ENCODE measurements at regions of chr2 and their contacts with region 1.

Region 1: GRCh38 chr2:7758073-7758759 is 841.0 kb downstream of the RNF144A start:
- DNase-seq: no peak
- H3K4me3 Mint-ChIP-seq: no peak overlapping the region
- H3K27ac Mint-ChIP-seq: no peak overlapping the region
- H3K4me1 Mint-ChIP-seq: peaks cover 12% of the 10 kb centered on the region
- H3K27me3 Mint-ChIP-seq: peaks cover 12% of the 10 kb centered on the region

Region 2: DNA sequence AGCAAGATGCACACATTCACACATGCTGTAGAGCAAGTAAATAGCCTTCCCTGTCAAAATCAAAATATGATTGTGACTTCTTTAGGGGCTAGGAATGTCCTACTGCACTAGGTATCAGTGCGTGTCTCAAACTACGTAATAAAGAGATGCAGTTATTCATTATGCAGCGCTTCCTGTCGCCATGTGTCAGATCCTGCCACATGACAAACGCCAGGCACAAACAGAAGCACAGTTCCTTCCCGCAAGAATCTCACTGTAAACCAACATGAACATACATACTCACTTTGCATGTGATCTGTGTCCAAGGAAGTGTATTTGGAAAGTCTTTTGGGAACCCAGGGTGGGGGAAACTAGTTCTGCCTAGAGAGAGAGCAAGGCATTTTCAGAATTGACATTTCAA is 241.1 kb before region 1 on chr2:
- CTCF ChIA-PET with region 1: no interaction called
- intact Hi-C with region 1: no loop called
- DNase-seq: peak; percentile 61
- H3K4me3 Mint-ChIP-seq: peak overlapping the region; percentile 31
- H3K27ac Mint-ChIP-seq: peak overlapping the region; percentile 77
- H3K4me1 Mint-ChIP-seq: peaks cover 37% of the 10 kb centered on the region
- H3K27me3 Mint-ChIP-seq: no peaks in the 10 kb centered on the region

Region 3: DNA sequence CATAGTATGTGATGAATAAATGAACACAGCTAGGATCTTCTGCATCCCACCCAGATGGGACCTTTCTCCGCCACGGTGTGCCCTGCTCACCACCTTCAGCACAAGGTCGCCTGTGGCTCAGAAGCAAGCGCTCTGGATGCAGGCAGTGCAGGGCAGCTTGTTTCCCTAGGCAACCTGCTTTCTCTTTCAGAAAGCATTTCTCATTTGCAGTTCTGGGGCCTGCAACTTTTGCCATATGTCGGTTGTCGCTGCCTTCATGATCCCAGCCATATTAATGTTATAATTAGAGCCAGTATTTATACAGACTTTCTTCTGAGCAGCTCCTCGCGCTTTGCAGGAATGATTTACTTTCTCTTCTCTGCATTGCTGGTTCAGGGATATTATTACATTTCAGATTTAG is 148.2 kb before region 1 on chr2:
- CTCF ChIA-PET with region 1: no interaction called
- intact Hi-C with region 1: no loop called
- DNase-seq: no peak
- H3K4me3 Mint-ChIP-seq: no peak overlapping the region
- H3K27ac Mint-ChIP-seq: no peak overlapping the region
- H3K4me1 Mint-ChIP-seq: peaks cover 31% of the 10 kb centered on the region
- H3K27me3 Mint-ChIP-seq: no peaks in the 10 kb centered on the region

Region 4: DNA sequence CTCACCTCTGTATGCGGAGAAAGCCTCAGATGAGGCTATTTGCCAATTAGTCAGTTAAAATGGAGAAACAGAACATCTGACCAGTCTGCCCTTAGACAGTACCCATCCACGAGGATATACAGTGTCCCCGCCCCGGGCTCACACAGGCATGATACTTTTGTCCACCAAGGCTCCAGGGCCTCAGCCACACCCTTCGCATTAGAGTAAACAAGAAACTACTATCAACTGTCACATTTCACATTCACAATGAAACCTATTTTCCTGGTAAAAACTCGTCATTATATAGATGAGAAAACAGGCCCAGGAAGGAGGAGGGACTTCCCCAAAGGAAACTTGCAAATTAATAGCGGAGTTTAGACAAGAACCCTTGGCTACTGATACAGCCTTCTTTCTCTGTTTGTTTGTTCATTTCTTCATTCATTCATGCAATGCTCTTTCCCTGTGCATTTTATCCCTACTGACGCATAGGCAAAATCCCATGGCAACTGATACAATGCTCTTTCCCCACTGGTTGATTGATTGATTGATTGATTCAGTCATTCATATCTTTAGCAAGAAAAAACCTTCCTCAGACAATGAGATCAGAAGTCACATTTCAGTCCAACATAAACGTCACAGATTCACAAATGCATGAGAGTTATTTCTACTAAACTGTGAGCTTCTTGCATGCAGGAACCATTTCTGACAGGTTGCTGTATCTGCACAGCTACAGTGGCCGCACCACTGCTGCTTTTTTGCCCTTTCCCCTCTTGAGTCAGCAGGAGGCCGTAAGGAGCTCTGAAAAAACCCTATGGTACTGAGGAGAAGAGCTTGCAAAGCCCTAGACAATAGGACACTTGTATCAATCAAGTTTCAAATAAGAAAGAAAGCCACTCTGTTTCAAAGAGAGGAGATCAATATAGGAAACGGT is 63.9 kb before region 1 on chr2:
- CTCF ChIA-PET with region 1: no interaction called
- intact Hi-C with region 1: loop called (anchors 1 kb)
- DNase-seq: no peak
- H3K4me3 Mint-ChIP-seq: no peak overlapping the region
- H3K27ac Mint-ChIP-seq: no peak overlapping the region
- H3K4me1 Mint-ChIP-seq: peaks cover 28% of the 10 kb centered on the region
- H3K27me3 Mint-ChIP-seq: no peaks in the 10 kb centered on the region

Region 5: GRCh38 chr2:7773362-7774360 is 15.4 kb after region 1 on chr2:
- CTCF ChIA-PET with region 1: interaction called, 4 read pairs
- intact Hi-C with region 1: loop called (anchors 1 kb)
- DNase-seq: peak; percentile 59
- H3K4me3 Mint-ChIP-seq: no peak overlapping the region
- H3K27ac Mint-ChIP-seq: no peak overlapping the region
- H3K4me1 Mint-ChIP-seq: peaks cover 20% of the 10 kb centered on the region
- H3K27me3 Mint-ChIP-seq: no peaks in the 10 kb centered on the region

Region 6: DNA sequence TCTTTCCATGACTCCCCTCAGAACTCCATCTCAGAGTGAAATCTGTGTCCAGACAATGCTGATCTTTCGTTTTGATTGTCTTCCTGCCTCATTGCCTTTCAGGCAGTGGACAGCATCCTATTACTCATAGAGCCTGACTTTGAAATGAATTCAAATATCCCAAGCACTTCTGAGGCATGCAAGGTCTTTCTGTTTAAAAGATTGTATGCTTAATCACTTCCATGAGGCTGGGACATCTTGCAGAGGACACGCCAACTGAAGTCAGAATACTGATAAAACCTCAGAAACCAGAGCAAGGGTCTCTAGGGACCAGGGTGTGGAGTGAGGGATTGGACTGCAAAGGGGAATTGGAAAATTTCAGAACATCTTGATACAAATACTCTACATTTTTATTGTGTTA is 87.1 kb after region 1 on chr2:
- CTCF ChIA-PET with region 1: no interaction called
- intact Hi-C with region 1: loop called (anchors 1 kb)
- DNase-seq: no peak
- H3K4me3 Mint-ChIP-seq: no peak overlapping the region
- H3K27ac Mint-ChIP-seq: no peak overlapping the region
- H3K4me1 Mint-ChIP-seq: peaks cover 19% of the 10 kb centered on the region
- H3K27me3 Mint-ChIP-seq: peaks cover 5% of the 10 kb centered on the region

Region 7: DNA sequence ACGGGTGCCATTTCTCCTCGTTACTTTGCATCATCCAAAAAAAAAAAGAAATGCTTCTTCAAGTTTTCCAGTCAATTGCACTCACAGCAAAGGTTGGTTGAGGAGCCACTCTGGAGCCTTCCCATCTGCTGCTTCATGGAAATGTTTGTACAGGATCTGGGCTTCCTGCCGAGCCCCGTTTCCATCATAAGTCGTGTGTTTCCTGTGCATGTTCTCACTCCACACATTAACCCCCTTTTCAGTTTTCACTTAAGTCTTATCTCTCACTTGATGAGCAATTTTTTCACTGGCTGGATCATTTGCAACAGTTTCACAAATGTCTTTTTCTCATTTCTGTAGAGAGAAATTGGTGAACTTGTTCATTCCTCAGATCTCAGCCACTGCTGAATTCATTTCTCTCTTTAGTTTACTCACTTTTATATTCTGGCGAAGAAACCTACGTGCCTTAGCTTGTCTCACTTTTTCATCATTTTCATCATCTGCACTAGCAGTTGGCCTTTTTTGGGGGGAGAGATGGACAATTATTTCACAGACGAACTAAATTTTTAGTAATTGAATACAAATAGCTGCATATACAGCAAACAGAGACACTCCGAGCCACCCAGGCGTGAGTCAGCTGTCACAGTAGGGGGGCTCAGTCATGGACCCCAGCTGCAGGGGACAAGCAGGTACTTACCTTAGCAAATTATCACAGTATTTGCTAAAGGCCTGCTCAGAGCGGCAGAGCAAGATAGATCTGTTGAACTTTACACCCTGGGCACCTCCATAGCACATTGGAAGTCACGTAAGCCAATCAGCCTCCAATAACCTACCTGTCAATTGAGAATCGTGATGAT is 172.8 kb after region 1 on chr2:
- CTCF ChIA-PET with region 1: no interaction called
- intact Hi-C with region 1: loop called (anchors 1 kb)
- DNase-seq: peak; percentile 45
- H3K4me3 Mint-ChIP-seq: no peak overlapping the region
- H3K27ac Mint-ChIP-seq: peak overlapping the region; percentile 74
- H3K4me1 Mint-ChIP-seq: peaks cover 19% of the 10 kb centered on the region
- H3K27me3 Mint-ChIP-seq: no peaks in the 10 kb centered on the region

Region 8: DNA sequence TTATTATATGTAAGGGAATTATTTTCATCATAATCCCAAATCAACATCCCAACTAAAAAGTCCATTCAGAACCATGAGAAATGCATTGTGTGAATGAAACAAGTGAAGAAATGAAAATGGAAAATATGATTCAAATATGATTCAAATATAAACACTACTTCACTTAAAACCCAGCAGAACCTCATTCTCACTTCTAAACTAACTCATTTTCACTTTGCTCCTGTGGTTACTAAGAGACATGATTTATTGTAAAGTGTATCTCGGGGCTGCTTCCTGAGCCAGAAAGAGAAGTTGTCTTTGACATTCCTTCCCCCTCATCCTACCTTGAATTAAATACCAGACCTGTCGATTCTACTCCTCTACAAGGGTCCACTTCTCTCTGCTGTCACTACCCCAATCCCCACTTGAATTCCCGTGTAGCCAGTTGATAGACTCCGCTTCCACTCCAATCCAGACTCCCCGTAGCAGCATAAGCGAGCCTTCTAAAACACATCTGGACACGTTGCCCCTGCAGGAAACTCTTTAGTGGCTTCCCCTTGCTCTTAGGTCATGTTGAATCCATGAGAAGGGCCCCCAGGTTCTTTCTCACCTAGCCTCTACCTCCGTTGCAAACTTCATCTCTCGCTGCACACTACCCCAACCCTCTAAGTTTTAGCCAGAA is 226.6 kb after region 1 on chr2:
- CTCF ChIA-PET with region 1: no interaction called
- intact Hi-C with region 1: loop called (anchors 1 kb)
- DNase-seq: peak; percentile 22
- H3K4me3 Mint-ChIP-seq: peak overlapping the region; percentile 8
- H3K27ac Mint-ChIP-seq: peak overlapping the region; percentile 62
- H3K4me1 Mint-ChIP-seq: peaks cover 20% of the 10 kb centered on the region
- H3K27me3 Mint-ChIP-seq: peaks cover 4% of the 10 kb centered on the region

Region 9: DNA sequence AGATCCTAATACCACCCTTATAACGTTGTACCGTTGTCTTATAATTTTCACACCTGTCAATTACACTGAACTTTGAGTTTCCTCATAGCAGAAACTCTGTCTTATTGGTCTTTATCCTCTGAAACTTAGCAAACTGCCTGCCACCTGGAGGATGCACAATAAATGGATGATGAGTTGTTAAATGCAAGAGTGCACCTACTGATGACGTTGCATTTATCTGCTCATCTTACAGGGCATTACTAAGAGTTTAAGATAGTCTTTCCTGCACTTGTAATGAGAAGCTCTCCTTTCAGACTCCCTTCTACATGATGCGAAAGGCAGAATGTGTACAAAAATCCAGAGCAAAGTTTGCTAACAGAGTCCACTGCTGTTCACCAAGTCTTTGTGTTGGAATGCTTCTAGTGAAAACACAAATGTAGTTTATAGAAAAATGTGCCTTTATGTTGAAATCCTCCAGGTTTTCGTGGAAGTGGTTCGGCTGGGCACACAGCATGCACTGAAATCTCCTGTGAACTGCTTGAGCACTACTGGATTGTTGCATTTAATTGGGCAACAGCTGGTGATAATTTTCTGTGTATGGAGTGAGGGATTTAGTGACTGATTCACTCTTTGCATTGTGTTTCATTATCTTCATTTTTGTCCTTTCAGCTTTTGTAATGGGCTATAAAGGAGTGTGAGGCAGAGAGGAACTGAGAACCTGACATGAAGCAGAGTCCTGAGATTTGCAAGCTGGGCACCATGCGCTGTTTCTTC is 257.8 kb after region 1 on chr2:
- CTCF ChIA-PET with region 1: no interaction called
- intact Hi-C with region 1: no loop called
- DNase-seq: no peak
- H3K4me3 Mint-ChIP-seq: no peak overlapping the region
- H3K27ac Mint-ChIP-seq: no peak overlapping the region
- H3K4me1 Mint-ChIP-seq: no peaks in the 10 kb centered on the region
- H3K27me3 Mint-ChIP-seq: no peaks in the 10 kb centered on the region

Region 10: DNA sequence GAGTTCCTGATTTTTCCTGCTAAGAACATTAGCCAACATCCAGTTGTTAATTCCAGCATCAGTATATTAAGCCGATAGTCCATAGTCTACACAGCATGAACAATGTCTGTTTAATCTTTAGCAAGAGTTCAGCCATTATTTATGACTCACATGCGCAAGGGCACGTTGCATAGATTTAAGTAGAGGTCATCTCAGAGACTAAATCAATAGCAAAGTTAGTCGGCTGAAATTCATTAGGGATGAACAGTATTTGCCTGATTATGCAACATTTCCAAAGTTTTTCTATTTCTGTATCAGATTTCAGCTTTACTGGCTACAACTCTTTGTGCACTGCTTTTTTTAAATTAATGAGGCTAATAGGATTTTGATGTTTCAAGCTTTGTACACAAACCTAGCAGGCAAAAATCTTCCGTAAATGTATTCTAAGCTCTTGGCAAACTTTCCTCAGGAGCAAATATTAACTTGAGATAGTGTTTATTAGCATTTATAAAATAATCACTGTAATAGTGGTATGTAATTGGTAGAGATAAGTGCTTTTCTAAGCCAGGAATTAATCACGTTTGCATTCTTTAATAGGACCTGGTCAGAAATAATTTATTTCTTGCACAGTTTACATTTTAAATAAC is 345.0 kb after region 1 on chr2:
- CTCF ChIA-PET with region 1: no interaction called
- intact Hi-C with region 1: no loop called
- DNase-seq: no peak
- H3K4me3 Mint-ChIP-seq: no peak overlapping the region
- H3K27ac Mint-ChIP-seq: no peak overlapping the region
- H3K4me1 Mint-ChIP-seq: no peaks in the 10 kb centered on the region
- H3K27me3 Mint-ChIP-seq: no peaks in the 10 kb centered on the region

Region 11: DNA sequence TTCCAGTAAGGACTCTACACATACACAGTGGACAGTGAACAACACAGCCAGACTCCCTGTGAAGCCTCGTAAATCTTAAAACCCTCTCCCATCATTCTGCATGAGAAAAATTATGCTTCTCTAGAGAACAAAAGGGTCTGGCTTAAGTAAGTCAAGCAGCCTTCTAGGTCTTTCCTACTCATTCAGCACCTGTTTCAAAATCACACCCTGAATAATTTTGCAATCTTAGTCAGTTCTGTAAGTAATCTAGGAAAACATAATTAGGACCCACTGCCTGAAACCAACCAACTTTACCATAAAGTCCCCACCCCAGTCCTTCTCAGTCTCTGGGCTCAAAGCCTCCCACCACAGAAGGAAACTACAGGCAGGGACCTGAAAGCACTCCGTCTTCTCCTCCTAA is 1735.9 kb after region 1 on chr2:
- CTCF ChIA-PET with region 1: no interaction called
- intact Hi-C with region 1: loop called (anchors 5 kb)
- DNase-seq: no peak
- H3K4me3 Mint-ChIP-seq: no peak overlapping the region
- H3K27ac Mint-ChIP-seq: peak overlapping the region; percentile 61
- H3K4me1 Mint-ChIP-seq: peaks cover 32% of the 10 kb centered on the region
- H3K27me3 Mint-ChIP-seq: no peaks in the 10 kb centered on the region

Measured in activated naive CD4-positive, alpha-beta T cell treated with anti-CD3 and anti-CD28 coated beads for 36 hours (primary cell).